BJ (cell line): ENCODE measurements at regions of chr1 and their contacts with region 1.

Region 1: GRCh38 chr1:17538428-17539117 is 925 bp upstream of the ARHGEF10L start:
- DNase-seq: no peak
- H3K4me3 ChIP-seq: no peak overlapping the region
- H3K27me3 ChIP-seq: no peaks in the 10 kb centered on the region
- CTCF ChIP-seq: no peak

Region 2: GRCh38 chr1:17513131-17513530 is 25.4 kb before region 1 on chr1:
- CTCF ChIA-PET with region 1: no interaction called
- POLR2A ChIA-PET with region 1: no interaction called
- DNase-seq: no peak
- H3K4me3 ChIP-seq: no peak overlapping the region
- H3K27me3 ChIP-seq: peaks cover 4% of the 10 kb centered on the region; the same call in 1 of the 2 replicates
- CTCF ChIP-seq: no peak

Region 3: GRCh38 chr1:18637511-18637960 is 1099.0 kb after region 1 on chr1:
- CTCF ChIA-PET with region 1: no interaction called
- POLR2A ChIA-PET with region 1: interaction called, 10 read pairs
- DNase-seq: no peak
- H3K4me3 ChIP-seq: no peak overlapping the region
- H3K27me3 ChIP-seq: peaks cover 81% of the 10 kb centered on the region
- CTCF ChIP-seq: no peak